Prostate gland (tissue), 2 donors: ENCODE measurements at regions of chr13 and their contacts with region 1.

Region 1: GRCh38 chr13:41384755-41385503 is 72.4 kb upstream of the RGCC start:
- DNase-seq: no peak
- H3K4me3 ChIP-seq: no peak overlapping the region
- H3K27ac ChIP-seq: no peak overlapping the region
- H3K4me1 ChIP-seq: no peaks in the 10 kb centered on the region
- H3K27me3 ChIP-seq: no peaks in the 10 kb centered on the region
- CTCF ChIP-seq: peak in 3 of 4 experiments; percentile 23 to 52 (median 44)
- POLR2A ChIP-seq: no peak

Region 2: GRCh38 chr13:41652727-41653361 is 267.9 kb after region 1 on chr13:
- intact Hi-C with region 1: loop called (anchors 10 kb)
- DNase-seq: peak; percentile 30
- H3K4me3 ChIP-seq: no peak overlapping the region
- H3K27ac ChIP-seq: peak overlapping the region in 1 of 2 donors; percentile 46
- H3K4me1 ChIP-seq: no peaks in the 10 kb centered on the region
- H3K27me3 ChIP-seq: no peaks in the 10 kb centered on the region
- CTCF ChIP-seq: peak in 3 of 4 experiments; percentile 49 to 89 (median 85)
- POLR2A ChIP-seq: no peak

Region 3: DNA sequence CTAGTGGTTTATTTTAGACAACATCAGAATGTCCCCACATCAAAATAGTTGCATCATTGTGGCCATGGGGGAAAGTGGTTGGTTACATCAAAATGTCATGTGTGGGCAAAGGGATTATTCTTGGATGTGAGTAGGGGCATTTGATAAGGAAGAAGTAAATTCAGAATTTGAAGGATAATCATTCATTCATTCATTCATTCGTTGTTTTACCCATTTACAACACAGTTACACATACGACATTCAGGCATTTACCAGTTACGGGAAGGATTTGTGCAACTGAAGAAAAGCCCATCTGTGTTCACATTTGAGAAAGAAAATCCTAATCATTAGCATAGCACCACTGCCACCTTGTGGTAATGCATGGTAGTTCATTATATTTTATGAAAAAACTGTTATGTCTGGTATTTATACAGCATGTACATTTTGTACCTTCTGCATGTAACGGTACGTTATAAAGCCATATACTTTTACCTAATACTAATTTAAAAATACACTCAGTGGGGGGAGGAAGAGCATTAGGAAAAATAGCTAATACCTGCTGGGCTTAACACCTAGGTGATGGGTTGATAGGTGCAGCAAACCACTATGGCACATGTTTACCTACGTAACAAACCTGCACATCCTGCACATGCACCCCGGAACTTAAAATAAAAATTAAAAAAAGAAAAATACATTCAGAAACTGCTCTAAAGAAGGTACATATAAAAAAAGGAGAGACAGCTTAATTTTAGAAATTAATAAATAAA is 725.7 kb after region 1 on chr13:
- intact Hi-C with region 1: loop called (anchors 10 kb)
- DNase-seq: peak; percentile 44
- H3K4me3 ChIP-seq: no peak overlapping the region
- H3K27ac ChIP-seq: no peak overlapping the region
- H3K4me1 ChIP-seq: no peaks in the 10 kb centered on the region
- H3K27me3 ChIP-seq: no peaks in the 10 kb centered on the region
- CTCF ChIP-seq: peak; percentile 85 to 96 (median 91)
- POLR2A ChIP-seq: no peak